G401 (cell line): ENCODE measurements at regions of chr1 and their contacts with region 1.

Region 1: GRCh38 chr1:235093696-235094592 is 34.7 kb downstream of the TOMM20 start:
- DNase-seq: peak; percentile 82

Region 2: DNA sequence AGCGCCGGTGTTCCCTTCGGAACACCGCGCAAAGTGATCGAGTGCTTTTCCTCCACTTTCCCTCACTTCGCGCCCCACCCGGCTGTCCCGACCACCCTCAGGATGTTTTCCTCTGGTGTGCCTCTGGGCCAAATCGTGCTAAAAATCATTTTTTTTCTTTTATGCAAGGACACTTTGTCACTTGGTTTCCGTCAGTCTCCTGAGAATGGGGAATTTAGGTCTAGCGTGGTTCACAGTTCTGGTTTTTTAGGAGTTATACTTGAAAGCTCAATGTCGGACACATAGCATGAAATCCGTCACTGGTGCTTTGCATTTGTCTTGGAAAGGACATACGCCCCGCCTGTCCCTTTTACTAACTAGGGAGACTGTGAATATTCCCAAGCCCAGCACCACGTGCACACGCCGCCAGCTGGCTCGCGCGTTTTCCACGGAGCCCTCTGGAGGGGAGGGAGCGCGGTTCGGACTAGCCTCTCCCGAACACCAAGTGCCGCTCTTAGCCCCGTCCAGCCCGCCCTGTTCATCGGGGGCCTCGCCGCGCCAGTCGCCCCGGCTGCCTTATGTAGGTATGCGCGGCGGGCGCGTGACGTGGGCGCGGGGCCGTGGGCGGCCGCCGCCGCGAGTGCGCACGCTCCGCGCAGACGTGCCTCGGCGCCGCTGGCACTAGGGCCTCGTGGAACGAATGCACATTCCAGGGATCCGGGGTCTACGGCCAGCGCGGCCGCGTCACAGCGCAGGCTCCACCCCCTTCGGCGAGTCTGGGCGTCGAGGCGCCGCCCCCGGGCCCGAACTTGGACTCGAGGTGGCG is 483.4 kb before region 1 on chr1:
- in situ Hi-C with region 1: loop called (anchors 25 kb)
- DNase-seq: peak; percentile 87

Region 3: GRCh38 chr1:234963180-234963903 is 130.6 kb before region 1 on chr1:
- in situ Hi-C with region 1: loop called (anchors 25 kb)
- DNase-seq: no peak

Region 4: DNA sequence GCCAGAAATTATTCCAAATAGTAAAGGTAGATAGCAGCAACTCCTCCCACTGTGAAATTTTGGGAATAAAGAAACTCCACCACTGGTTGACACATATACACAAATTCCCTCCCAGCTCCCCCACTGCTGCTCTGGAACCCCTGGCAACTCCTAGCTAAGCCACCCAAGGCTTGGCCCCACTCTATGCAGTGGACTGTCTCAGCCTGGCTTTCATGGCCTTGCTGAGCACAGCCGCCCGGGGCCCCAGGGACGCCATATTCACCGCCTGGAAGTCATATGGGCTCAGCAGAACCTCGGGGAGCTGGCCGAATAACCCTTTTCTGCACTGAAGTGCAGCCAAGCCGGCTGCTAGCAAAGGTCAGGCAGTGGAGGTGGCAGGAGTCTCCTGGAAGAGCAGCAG is 82.5 kb after region 1 on chr1:
- in situ Hi-C with region 1: no loop called
- DNase-seq: no peak